GM10248 (cell line): ENCODE measurements at regions of chr1 and their contacts with region 1.

Region 1: GRCh38 chr1:35715568-35716002 is 3.1 kb downstream of the C1orf216 start:
- DNase-seq: peak; percentile 85
- CTCF ChIP-seq: peak; percentile 86

Region 2: DNA sequence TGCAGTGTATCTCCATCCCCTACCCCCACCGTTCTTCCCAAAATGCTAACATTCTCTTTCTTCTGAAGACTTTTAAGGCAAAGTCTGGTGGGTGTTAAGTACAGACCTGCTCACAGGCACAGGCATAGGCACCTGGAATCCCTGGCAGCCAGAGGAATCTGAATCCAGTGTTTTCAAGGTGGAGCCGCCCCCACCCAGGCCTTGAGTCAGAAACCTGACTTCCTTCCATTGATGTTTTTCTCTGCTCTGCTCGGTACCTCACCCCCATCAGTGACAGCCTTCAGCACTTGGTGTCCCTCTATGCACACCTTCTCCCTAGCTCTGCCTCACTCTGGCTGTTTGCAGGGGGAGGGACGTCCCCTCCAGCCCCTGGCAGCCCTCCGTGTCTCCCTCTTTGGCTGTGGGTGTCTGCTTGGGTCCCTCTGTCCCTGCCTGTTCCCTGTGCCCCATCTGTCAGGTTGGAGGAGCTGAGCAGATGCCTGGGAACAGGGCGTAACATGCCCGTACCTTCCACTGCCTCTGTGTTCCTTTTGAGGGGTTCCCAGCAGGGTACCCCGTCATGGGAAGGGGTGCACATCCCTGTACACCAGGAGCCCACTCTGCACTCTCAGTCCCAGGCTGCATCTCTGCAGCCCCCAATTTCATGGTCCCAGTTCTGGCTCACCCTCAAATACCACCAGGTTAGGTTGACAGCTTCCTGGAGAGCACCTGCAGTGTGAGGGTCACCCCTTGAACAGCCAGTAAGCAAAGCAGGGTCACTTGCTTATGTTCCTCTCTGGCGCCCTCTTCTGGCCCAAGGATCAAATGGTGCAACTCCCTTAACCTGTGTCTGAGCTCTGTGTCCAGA is 151.3 kb before region 1 on chr1:
- CTCF ChIA-PET with region 1: interaction called, 46 read pairs
- POLR2A ChIA-PET with region 1: no interaction called
- DNase-seq: peak; percentile 86
- CTCF ChIP-seq: peak; percentile 83

Region 3: DNA sequence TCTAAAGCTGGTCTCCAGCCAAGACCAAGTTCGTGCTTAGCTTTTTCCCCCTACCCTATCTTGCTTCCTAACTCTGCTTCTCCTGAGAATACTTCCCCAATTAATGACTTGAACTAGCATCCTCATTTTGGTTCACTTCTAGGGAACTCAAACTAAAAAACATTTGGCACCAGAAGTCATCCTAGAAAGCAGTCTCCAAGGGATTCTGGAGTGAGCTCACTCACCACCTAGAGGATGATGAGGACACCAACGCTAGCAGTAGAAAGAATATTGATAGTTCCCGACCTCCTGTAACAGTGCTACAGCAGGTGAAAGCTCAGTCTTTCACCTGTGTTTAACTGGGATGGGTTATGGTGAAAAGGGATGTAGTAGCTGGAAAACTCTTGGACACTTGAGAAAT is 69.5 kb before region 1 on chr1:
- CTCF ChIA-PET with region 1: interaction called, 16 read pairs
- POLR2A ChIA-PET with region 1: no interaction called
- DNase-seq: no peak
- CTCF ChIP-seq: no peak

Region 4: GRCh38 chr1:35726450-35727433 is 11.2 kb after region 1 on chr1:
- CTCF ChIA-PET with region 1: interaction called, 211 read pairs
- POLR2A ChIA-PET with region 1: no interaction called
- DNase-seq: peak; percentile 63
- CTCF ChIP-seq: peak; percentile 83

Region 5: DNA sequence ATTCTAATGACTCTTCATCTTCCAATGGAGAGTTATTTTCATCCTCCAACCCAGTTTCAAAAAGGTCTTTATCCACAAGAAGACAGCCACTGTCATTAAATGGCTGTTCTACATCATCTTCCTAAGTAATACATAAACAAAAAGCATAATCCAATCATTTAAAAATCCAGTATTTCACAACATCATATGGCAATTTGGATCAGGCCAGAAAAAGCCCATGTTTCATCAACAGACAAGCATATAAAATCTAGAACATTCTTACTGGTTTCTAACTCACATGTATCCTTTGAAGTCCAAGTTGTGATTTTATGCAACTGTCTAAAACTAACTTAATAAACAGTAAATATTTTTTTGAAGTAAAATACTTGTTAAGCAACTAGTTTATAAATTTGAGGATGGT is 47.6 kb after region 1 on chr1:
- CTCF ChIA-PET with region 1: interaction called, 10 read pairs
- POLR2A ChIA-PET with region 1: no interaction called
- DNase-seq: no peak
- CTCF ChIP-seq: no peak